HEK293T (cell line): ENCODE measurements at regions of chr3 and their contacts with region 1.

Region 1: DNA sequence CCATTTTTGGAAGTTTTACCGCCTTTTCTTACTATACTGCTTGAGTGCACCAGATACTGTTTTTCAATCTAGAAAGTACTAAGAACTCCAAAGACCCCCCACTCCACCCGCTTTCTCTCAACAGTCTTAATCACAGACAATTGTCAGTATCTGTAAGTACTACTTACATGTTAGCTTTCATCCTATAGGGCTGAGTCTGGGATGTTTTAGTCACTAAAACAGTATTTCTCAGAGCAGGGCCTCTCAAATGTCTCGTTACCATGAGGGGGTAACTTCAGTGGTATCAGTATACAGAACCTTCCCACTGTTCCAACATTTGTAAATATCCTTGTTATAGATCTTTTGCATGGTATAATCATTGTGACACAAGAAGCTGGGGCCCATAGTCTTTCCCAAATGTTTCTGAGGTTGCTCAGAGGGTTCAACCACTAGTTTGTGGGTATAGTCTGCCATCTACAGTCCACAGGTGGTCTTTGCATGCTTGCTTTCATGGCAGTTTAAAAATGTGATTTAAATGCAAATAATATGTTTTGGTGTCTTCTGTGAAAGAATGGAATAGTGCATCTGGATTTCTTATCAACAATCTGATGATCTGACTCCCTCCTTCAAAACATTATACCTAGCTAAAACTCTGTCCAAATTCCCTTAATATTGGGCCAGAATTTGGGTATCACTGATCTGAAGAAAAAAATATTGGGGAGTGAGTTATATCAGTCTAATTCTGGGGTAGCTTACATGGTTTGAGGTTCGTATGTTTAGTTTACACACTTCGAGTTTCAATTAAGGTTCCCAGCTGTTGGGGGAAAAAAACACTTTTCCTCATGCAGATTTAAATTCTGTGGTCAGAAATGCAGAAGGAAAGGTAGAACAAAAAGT is 18.0 kb upstream of the DNAJC13 start:
- DNase-seq: peak; percentile 66

Region 2: GRCh38 chr3:132352541-132353143 is 46.6 kb before region 1 on chr3:
- CTCF ChIA-PET with region 1: interaction called, 11 read pairs
- POLR2A ChIA-PET with region 1: interaction called, 3 read pairs
- DNase-seq: peak; percentile 72